ENCODE measurements at regions of chr7 and their contacts with region 1.

Region 1: DNA sequence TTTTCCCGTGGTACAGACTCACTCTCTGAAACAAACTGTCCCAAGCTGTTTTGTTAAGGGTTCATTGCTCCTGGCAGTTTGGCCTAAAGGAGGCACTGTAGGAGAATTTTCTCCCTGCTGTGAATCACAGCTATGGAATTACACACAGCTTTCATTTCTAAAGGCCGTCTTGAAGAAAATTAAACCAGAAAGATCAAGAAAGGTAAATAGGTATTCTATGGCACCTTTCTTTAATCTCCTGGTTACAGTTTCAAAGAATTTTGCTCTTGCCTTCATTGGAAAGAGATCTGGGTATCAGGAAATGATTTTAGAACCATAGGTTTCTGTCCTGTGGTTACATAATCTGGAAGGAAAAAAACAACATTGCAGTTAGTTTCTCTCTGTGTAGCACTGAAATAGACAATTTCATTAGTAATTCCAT is 51.2 kb downstream of the PDK4 start:
- DNase-seq: peak in 1 of 4 experiments; percentile 14
- ATAC-seq: peak; percentile 71
- H3K4me3 ChIP-seq: no peak overlapping the region
- H3K27ac ChIP-seq: no peak overlapping the region
- H3K4me1 ChIP-seq: 0 out of 5 replicates have a peak, but pooled peaks cover 0 to 6% of the 10 kb centered on the region in 2 experiments
- H3K27me3 ChIP-seq: no peaks in the 10 kb centered on the region; a peak in 2 of 5 replicates
- CTCF ChIP-seq: peak; percentile 39 to 68 (median 40); a peak in 4 of 6 replicates
- EP300 ChIP-seq: no peak
- POLR2A ChIP-seq: no peak
- RAD21 ChIP-seq: peak; percentile 82 to 88

Region 2: DNA sequence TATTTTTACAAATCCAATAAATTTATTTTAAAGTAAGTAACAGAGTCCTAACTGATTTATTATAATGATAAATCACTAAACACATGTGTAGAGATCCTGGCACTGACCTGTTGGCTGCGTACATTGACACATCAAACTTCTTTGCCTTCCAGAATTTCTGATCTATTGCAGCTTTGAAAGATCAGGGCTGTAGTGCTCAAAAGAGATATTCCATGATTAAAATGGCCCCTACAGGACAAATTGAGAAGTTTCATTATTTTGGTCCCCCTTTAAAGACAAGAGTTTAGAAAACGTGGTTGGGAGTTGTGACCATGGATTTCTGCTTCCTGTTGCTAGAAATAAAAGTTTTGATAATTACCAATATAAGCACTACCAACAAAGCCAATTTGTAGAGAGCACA is 138.9 kb after region 1 on chr7:
- CTCF ChIA-PET with region 1: interaction called, 12 read pairs
- POLR2A ChIA-PET with region 1: no interaction called
- in situ Hi-C with region 1: loop called (anchors 5 kb)
- intact Hi-C with region 1: loop called (anchors 1 kb)
- DNase-seq: peak in 3 of 4 experiments; percentile 8 to 27 (median 19)
- ATAC-seq: peak; percentile 63
- H3K4me3 ChIP-seq: no peak overlapping the region
- H3K27ac ChIP-seq: no peak overlapping the region
- H3K4me1 ChIP-seq: no peaks in the 10 kb centered on the region
- H3K27me3 ChIP-seq: no peaks in the 10 kb centered on the region
- CTCF ChIP-seq: peak; percentile 16 to 57 (median 34); a peak in 3 of 6 replicates
- EP300 ChIP-seq: no peak
- POLR2A ChIP-seq: no peak
- RAD21 ChIP-seq: peak; percentile 64 to 83

Measured in K562 (cell line).